Head of caudate nucleus (tissue), 42 donors: ENCODE measurements at regions of chr22 and their contacts with region 1.

Region 1: GRCh38 chr22:26330966-26331625 is 98.0 kb upstream of the ASPHD2 start:
- DNase-seq: peak in 41 of 42 donors; percentile 29 to 88 (median 67)

Region 2: DNA sequence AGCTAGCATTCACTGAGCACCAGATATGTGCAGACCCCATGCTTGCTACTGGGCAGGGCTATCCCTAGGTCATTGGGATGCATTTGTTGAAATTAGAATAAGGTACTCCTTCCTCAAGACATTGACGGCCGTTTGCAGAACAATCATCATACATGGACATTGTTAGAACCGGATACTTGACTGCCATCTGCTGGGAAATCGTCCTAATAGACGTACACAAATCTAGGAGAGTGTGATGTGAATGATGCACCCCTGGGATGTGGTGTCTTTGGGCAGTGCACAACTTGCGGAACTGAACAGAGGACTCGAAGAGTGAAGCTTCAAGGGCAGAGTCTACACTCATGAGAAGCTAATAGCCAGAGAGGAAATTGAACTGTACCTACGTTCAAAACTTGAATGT is 553.2 kb before region 1 on chr22:
- intact Hi-C with region 1: loop called (anchors 10 kb)
- DNase-seq: peak in 14 of 42 donors; percentile 8 to 61 (median 26)

Region 3: GRCh38 chr22:26273011-26273675 is 58.0 kb before region 1 on chr22:
- intact Hi-C with region 1: no loop called
- DNase-seq: peak; percentile 42 to 84 (median 69)